ENCODE measurements at regions of chr19 and their contacts with region 1.

Region 1: GRCh38 chr19:13588957-13589833 is 82.9 kb upstream of the CACNA1A start:
- DNase-seq: peak; percentile 77 to 87
- H3K4me3 ChIP-seq: no peak overlapping the region
- H3K27ac ChIP-seq: no peak overlapping the region
- H3K4me1 ChIP-seq: peaks cover 0 to 6% (median 2%) of the 10 kb centered on the region in 4 donors
- H3K27me3 ChIP-seq: peaks cover 3 to 58% (median 11%) of the 10 kb centered on the region in 3 donors
- CTCF ChIP-seq: peak in 5 of 7 experiments; percentile 70 to 94 (median 91)
- EP300 ChIP-seq: no peak
- POLR2A ChIP-seq: no peak

Region 2: DNA sequence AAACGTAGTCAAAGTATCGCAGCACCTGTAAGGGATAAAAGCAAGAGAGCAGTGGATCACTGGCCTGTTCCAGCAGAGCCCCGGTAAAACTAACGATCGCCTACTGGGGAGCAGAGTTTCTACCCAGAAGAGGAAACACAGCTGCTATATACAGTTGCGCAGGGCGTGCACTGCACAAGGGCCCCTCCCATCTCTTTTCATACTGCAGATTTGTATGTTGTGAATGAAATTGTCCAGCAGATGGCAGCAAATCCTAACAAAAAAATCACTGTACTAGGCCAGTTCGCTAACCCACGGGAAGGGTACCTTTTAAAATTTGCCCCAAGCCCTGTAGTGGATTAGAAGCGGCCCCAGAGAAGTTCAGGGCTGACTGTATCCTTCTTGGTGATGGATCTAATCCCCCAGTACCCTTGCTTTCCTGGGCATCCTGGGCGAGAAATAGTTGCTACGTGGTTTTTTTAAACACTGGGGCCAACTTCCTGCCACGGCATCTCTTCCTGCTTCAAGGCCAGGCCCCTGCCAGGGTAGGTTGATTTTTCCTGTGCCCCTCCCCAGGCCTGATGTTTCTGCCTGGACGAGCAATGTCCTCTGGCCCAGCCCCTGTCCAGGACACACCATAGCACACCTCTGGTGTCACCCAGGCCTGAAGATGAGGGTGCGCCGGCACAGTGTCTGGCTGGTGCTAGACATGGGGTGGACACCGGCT is 311.9 kb before region 1 on chr19:
- intact Hi-C with region 1: loop called (anchors 5 kb)
- DNase-seq: peak; percentile 55 to 87
- H3K4me3 ChIP-seq: no peak overlapping the region
- H3K27ac ChIP-seq: no peak overlapping the region
- H3K4me1 ChIP-seq: peaks cover 0 to 8% (median 0%) of the 10 kb centered on the region in 4 donors
- H3K27me3 ChIP-seq: peaks cover 0 to 25% (median 10%) of the 10 kb centered on the region in 3 donors
- CTCF ChIP-seq: peak in 5 of 7 experiments; percentile 33 to 83 (median 68)
- EP300 ChIP-seq: no peak
- POLR2A ChIP-seq: no peak

Region 3: GRCh38 chr19:13723206-13723605 is 134.0 kb after region 1 on chr19:
- intact Hi-C with region 1: loop called (anchors 5 kb)
- DNase-seq: no peak
- H3K4me3 ChIP-seq: no peak overlapping the region
- H3K27ac ChIP-seq: no peak overlapping the region
- H3K4me1 ChIP-seq: peaks cover 0 to 2% (median 0%) of the 10 kb centered on the region in 4 donors
- H3K27me3 ChIP-seq: peaks cover 0 to 23% (median 6%) of the 10 kb centered on the region in 3 donors
- CTCF ChIP-seq: no peak
- EP300 ChIP-seq: no peak
- POLR2A ChIP-seq: no peak